ENCODE measurements at regions of chr10 and their contacts with region 1.

Region 1: GRCh38 chr10:70146489-70147258 is at the start of gene TYSND1:
- DNase-seq: peak; percentile 99
- H3K4me3 ChIP-seq: peak within 1 kb of the TSS; percentile 69 to 89 (median 78)
- H3K27ac ChIP-seq: peak within 1 kb of the TSS; percentile 95 to 98 (median 96)
- H3K4me1 ChIP-seq: peaks cover 0 to 32% (median 18%) of the 10 kb centered on the region in 4 donors
- H3K27me3 ChIP-seq: no peaks in the 10 kb centered on the region
- CTCF ChIP-seq: peak; percentile 33 to 71 (median 56)
- EP300 ChIP-seq: no peak
- POLR2A ChIP-seq: peak; percentile 68 to 78
- total RNA-seq, gene TYSND1: 7.9 to 10.3 (median 9.0) TPM

Region 2: DNA sequence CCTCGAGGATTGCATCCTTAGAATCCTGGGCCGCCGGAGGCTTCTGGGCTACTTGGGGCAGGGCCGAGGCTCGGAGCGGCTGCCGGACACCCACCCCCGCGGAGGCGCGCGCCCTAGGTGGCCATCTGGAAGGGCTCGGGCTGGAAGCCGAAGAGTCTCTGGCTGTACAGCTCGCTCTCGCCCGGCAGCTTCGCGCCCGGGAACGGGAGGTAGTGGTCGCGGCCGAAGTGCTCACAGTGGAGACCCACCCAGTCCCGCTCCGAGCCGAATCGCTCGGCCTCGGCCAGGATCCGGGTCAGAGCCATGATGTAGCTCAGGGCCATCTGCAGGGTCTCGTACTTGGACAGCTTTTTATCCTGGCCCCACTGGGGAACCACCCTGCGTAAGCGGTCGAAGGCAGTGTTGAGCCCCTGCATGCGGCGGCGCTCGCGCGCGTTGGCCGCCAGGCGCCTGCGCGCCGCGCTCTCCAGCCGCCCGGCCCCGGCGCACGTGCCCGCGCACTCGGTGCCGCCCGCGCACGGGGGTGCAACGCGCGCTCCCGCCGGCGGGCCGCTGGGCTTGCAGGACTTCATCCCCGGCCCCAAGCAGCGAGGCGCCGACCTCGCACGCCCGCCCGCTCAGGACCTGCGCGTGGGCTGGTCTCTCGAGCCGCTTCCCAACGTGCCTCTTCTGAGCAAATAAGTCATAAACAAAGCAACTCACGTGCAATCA is 1915.4 kb before region 1 on chr10:
- intact Hi-C with region 1: no loop called
- DNase-seq: peak; percentile 82
- H3K4me3 ChIP-seq: peak overlapping the region; percentile 47 to 66 (median 62)
- H3K27ac ChIP-seq: peak overlapping the region; percentile 81 to 93 (median 86)
- H3K4me1 ChIP-seq: peaks cover 0 to 14% (median 9%) of the 10 kb centered on the region in 4 donors
- H3K27me3 ChIP-seq: no peaks in the 10 kb centered on the region
- CTCF ChIP-seq: no peak
- EP300 ChIP-seq: no peak
- POLR2A ChIP-seq: no peak

Region 3: DNA sequence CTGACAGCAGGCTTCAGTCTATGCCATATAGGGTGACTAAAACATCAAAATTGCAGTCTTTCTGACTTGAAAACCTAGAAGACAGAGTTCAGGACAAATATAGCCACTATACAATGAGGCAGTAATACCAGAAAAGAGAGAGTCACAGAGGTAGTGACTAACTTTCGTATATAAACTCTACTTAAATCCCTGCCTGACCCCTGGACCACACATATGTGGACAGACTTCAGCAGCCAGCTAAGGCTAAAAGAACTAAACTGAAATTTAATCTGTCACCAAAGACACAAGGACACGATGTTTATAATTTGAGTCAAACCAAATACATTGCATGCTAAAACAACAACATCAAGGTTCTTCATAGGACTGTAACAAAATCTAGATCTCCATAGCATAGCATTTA is 158.6 kb before region 1 on chr10:
- intact Hi-C with region 1: no loop called
- DNase-seq: no peak
- H3K4me3 ChIP-seq: no peak overlapping the region
- H3K27ac ChIP-seq: no peak overlapping the region
- H3K4me1 ChIP-seq: no peaks in the 10 kb centered on the region
- H3K27me3 ChIP-seq: peaks cover 0 to 6% (median 0%) of the 10 kb centered on the region in 3 donors
- CTCF ChIP-seq: no peak
- EP300 ChIP-seq: no peak
- POLR2A ChIP-seq: no peak

Region 4: GRCh38 chr10:70115948-70116682 is 30.6 kb before region 1 on chr10:
- intact Hi-C with region 1: loop called (anchors 1 kb)
- DNase-seq: peak; percentile 74
- H3K4me3 ChIP-seq: no peak overlapping the region
- H3K27ac ChIP-seq: no peak overlapping the region
- H3K4me1 ChIP-seq: no peaks in the 10 kb centered on the region
- H3K27me3 ChIP-seq: no peaks in the 10 kb centered on the region
- CTCF ChIP-seq: peak; percentile 63 to 92 (median 83)
- EP300 ChIP-seq: no peak
- POLR2A ChIP-seq: no peak

Region 5: GRCh38 chr10:70169649-70170364 is 23.1 kb after region 1 on chr10:
- intact Hi-C with region 1: loop called (anchors 2 kb)
- DNase-seq: no peak
- H3K4me3 ChIP-seq: peak overlapping the region; percentile 79 to 95 (median 88)
- H3K27ac ChIP-seq: peak overlapping the region; percentile 91 to 97 (median 94)
- H3K4me1 ChIP-seq: peaks cover 0 to 48% (median 35%) of the 10 kb centered on the region in 4 donors
- H3K27me3 ChIP-seq: no peaks in the 10 kb centered on the region
- CTCF ChIP-seq: no peak
- EP300 ChIP-seq: no peak
- POLR2A ChIP-seq: no peak

Measured in sigmoid colon (tissue), 7 donors.